CD8-positive, alpha-beta T cell (primary cell): ENCODE measurements at regions of chr9 and their contacts with region 1.

Region 1: GRCh38 chr9:132507746-132508469 is 74.5 kb upstream of the BARHL1 start:
- DNase-seq: peak; percentile 33 to 79 (median 70)
- ATAC-seq: peak; percentile 58
- H3K4me3 ChIP-seq: no peak overlapping the region
- H3K4me3 Mint-ChIP-seq: no peak overlapping the region
- H3K27ac ChIP-seq: no peak overlapping the region
- H3K27ac Mint-ChIP-seq: no peak overlapping the region
- H3K4me1 ChIP-seq: peaks cover 11% of the 10 kb centered on the region
- H3K4me1 Mint-ChIP-seq: peaks cover 10% of the 10 kb centered on the region
- H3K27me3 ChIP-seq: peaks cover 2% of the 10 kb centered on the region in 2 experiments
- H3K27me3 Mint-ChIP-seq: peaks cover 13% of the 10 kb centered on the region
- CTCF ChIP-seq: peak; percentile 74

Region 2: DNA sequence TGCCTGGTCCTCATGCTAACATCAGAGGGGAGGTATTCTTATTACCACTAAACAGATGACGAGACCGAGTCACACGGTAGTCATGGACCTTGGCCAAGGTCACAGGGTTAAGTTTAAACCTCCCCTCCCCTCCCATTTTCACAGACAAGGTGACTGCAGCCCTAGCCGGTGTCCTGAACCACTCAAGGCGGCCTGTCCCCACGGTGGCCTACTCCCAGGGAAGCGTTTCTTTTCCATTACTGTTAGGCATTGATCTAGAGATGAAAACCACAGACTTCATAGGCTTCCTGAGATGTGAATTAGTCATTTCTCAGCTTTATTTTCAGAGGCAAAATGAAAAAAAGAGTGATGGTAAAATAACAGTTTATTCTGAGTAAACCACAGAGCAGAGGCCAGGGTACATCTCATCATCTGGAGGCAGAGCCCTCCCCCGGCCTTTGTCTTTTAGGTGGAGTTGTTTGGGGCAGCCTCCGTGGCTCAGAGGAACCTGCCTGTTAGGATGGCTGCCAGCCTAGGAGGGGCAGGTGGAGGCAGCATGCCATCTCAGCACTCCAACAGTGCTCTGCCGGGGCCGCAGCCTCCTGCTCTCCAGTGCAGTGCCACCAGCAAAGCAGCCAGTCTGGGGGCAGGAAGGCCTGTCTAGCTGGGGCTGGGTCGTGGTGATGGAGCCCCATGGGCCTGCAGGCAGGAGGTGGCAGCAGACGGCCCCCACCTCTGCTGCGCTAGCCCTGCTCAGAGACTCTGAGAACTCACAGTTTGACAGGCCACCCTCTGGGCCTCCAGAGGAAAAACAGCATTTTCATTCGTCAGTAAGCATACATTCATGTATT is 839.3 kb before region 1 on chr9:
- CTCF ChIA-PET with region 1: no interaction called
- POLR2A ChIA-PET with region 1: no interaction called
- intact Hi-C with region 1: no loop called
- DNase-seq: peak; percentile 41 to 88 (median 73)
- ATAC-seq: peak; percentile 74
- H3K4me3 ChIP-seq: peak overlapping the region; percentile 23 to 29
- H3K4me3 Mint-ChIP-seq: peak overlapping the region; percentile 63
- H3K27ac ChIP-seq: peak overlapping the region; percentile 64 to 94
- H3K27ac Mint-ChIP-seq: peak overlapping the region; percentile 99
- H3K4me1 ChIP-seq: peaks cover 73% of the 10 kb centered on the region
- H3K4me1 Mint-ChIP-seq: peaks cover 83% of the 10 kb centered on the region
- H3K27me3 ChIP-seq: no peaks in the 10 kb centered on the region
- H3K27me3 Mint-ChIP-seq: no peaks in the 10 kb centered on the region
- CTCF ChIP-seq: no peak

Region 3: GRCh38 chr9:132486706-132487350 is 21.1 kb before region 1 on chr9:
- CTCF ChIA-PET with region 1: interaction called, 13 read pairs
- POLR2A ChIA-PET with region 1: no interaction called
- intact Hi-C with region 1: no loop called
- DNase-seq: peak; percentile 10 to 90 (median 41)
- ATAC-seq: peak; percentile 68
- H3K4me3 ChIP-seq: peak overlapping the region; percentile 17 to 26
- H3K4me3 Mint-ChIP-seq: peak overlapping the region; percentile 61
- H3K27ac ChIP-seq: peak overlapping the region in 1 of 2 experiments; percentile 42
- H3K27ac Mint-ChIP-seq: peak overlapping the region; percentile 83
- H3K4me1 ChIP-seq: peaks cover 29% of the 10 kb centered on the region
- H3K4me1 Mint-ChIP-seq: peaks cover 26% of the 10 kb centered on the region
- H3K27me3 ChIP-seq: peaks cover 8 to 11% of the 10 kb centered on the region in 2 experiments
- H3K27me3 Mint-ChIP-seq: peaks cover 35% of the 10 kb centered on the region
- CTCF ChIP-seq: no peak

Region 4: DNA sequence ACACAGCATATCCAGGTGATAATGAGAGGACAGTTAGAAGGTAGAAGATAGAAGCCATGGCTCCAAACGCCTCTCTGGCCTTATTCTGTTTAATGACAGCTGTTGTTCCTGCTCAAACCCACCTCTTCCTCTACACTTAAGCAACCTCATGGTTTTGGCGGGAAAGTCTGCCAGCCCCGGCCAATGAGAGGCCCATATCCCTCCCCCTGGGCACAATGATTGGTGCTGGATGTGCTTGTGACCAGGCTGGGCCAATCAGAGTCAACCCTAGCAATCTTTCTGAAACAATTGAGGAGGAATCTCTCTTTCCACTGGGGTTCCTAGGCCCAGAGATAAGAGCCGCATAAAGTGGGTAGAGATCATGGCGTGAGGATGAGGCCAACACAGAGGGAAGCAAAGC is 465.8 kb after region 1 on chr9:
- CTCF ChIA-PET with region 1: no interaction called
- POLR2A ChIA-PET with region 1: no interaction called
- intact Hi-C with region 1: loop called in 1 of 2 experiments (anchors 2 kb)
- DNase-seq: peak in 1 of 9 experiments; percentile 28
- ATAC-seq: peak; percentile 41
- H3K4me3 ChIP-seq: no peak overlapping the region
- H3K4me3 Mint-ChIP-seq: no peak overlapping the region
- H3K27ac ChIP-seq: no peak overlapping the region
- H3K27ac Mint-ChIP-seq: no peak overlapping the region
- H3K4me1 ChIP-seq: peaks cover 3% of the 10 kb centered on the region
- H3K4me1 Mint-ChIP-seq: peaks cover 4% of the 10 kb centered on the region
- H3K27me3 ChIP-seq: peaks cover 6 to 8% of the 10 kb centered on the region in 2 experiments
- H3K27me3 Mint-ChIP-seq: peaks cover 19% of the 10 kb centered on the region
- CTCF ChIP-seq: no peak